ENCODE measurements at regions of chr22 and their contacts with region 1.

Region 1: GRCh38 chr22:37571258-37571991 is 8.5 kb downstream of the LGALS2 start:
- DNase-seq: no peak

Region 2: GRCh38 chr22:37161443-37161842 is 410.0 kb before region 1 on chr22:
- intact Hi-C with region 1: loop called in 1 of 2 experiments (anchors 2 kb)
- DNase-seq: no peak

Region 3: DNA sequence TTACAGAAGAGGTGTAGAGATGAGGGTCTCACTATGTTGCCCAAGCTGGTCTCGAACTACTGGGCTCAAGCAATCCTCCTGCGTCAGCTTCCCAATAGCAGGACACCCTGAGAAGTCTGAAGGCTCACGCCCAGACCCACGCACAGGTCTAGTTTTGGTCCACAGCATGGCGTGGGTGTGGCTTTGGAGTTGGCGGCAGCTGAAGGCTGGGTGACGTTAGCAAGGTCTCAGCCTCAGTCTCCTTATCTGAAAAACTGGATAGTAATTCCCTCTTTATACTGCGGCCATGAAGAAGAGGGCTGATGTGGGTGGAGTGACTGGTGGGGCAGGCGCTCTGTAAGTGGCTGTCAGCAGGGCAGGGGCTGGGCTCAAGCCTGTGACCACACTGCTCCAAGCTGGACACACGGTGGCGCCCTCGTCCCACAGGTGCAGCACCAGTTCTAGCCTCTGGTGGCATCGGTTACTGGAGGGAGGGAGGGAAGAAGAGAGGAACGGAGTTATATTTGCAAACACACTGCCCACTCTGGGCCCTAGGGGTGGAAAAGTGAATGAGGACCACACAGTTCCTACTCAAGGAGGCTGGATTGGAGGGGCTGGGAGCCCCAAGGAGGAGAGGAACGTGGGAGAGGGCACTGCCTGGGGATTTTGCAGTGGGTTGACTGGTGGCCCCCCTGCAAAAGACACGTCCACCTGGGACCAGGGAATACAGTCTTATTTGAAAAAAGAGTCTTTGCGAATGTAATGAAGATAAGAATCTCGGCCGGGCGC is 32.7 kb before region 1 on chr22:
- intact Hi-C with region 1: loop called in 1 of 2 experiments (anchors 5 kb)
- DNase-seq: peak; percentile 98